ENCODE measurements at regions of chr19 and their contacts with region 1.

Region 1: DNA sequence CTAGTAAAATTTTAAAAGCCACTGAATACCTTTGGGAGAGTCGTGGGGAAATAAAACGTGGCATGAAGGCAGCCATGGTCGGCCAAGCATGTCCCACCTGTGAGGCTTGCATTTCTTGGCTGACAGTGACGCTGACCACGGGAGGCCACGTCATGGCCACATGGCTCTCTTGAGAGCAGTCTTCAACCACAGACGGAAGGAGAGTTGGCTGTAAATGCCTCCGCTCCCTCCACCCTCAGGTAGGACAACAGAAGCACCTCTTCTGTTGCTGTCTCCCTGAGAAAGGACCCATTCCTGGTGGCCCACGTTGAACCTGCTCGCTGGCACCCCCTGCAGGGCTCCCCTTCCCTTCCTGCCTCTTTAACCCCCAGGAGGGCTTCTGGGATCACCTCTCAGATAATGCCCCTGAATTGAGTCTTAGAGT is 10.6 kb upstream of the LRRC25 start:
- DNase-seq: peak in 1 of 2 donors; percentile 66
- ATAC-seq: peak in 3 of 4 donors; percentile 31 to 42 (median 35)
- H3K4me3 ChIP-seq: no peak overlapping the region
- H3K27ac ChIP-seq: no peak overlapping the region
- H3K4me1 ChIP-seq: no peaks in the 10 kb centered on the region
- H3K27me3 ChIP-seq: peaks cover 0 to 1% (median 0%) of the 10 kb centered on the region in 3 donors
- CTCF ChIP-seq: peak; percentile 28

Region 2: GRCh38 chr19:18281082-18282020 is 126.7 kb before region 1 on chr19 and contains the start of gene JUND:
- intact Hi-C with region 1: loop called in 1 of 2 experiments (anchors 2 kb)
- DNase-seq: peak; percentile 98 to 99
- ATAC-seq: peak; percentile 76 to 81 (median 79)
- H3K4me3 ChIP-seq: peak within 1 kb of the TSS; percentile 84
- H3K27ac ChIP-seq: peak within 1 kb of the TSS; percentile 100
- H3K4me1 ChIP-seq: peaks cover 37% of the 10 kb centered on the region
- H3K27me3 ChIP-seq: no peaks in the 10 kb centered on the region
- CTCF ChIP-seq: no peak
- total RNA-seq, gene JUND: 68.0 to 77.1 (median 72.1) TPM

Region 3: GRCh38 chr19:18349524-18350128 is 58.4 kb before region 1 on chr19:
- intact Hi-C with region 1: loop called (anchors 1 to 5 kb)
- DNase-seq: peak; percentile 60 to 73
- ATAC-seq: peak; percentile 57 to 81 (median 74)
- H3K4me3 ChIP-seq: no peak overlapping the region
- H3K27ac ChIP-seq: no peak overlapping the region
- H3K4me1 ChIP-seq: peaks cover 3% of the 10 kb centered on the region
- H3K27me3 ChIP-seq: no peaks in the 10 kb centered on the region
- CTCF ChIP-seq: peak; percentile 75

Region 4: DNA sequence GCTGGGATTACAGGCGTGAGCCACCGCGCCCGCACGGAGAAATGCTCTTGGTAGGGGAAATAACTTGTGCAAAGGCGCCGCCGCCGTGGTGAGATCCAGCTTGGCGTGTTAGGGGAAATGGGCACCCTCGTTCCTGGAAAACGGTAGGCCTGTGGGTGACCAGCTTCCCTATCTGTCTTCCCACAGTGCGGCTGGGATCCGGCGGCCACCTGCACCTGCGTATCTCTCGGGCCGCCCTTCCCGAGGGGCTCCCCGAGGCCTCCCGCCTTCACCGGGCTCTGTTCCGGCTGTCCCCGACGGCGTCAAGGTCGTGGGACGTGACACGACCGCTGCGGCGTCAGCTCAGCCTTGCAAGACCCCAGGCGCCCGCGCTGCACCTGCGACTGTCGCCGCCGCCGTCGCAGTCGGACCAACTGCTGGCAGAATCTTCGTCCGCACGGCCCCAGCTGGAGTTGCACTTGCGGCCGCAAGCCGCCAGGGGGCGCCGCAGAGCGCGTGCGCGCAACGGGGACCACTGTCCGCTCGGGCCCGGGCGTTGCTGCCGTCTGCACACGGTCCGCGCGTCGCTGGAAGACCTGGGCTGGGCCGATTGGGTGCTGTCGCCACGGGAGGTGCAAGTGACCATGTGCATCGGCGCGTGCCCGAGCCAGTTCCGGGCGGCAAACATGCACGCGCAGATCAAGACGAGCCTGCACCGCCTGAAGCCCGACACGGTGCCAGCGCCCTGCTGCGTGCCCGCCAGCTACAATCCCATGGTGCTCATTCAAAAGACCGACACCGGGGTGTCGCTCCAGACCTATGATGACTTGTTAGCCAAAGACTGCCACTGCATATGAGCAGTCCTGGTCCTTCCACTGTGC is 19.7 kb before region 1 on chr19:
- intact Hi-C with region 1: loop called (anchors 2 kb)
- DNase-seq: peak; percentile 84 to 92
- ATAC-seq: peak; percentile 91 to 94 (median 92)
- H3K4me3 ChIP-seq: peak overlapping the region; percentile 59
- H3K27ac ChIP-seq: peak overlapping the region; percentile 50
- H3K4me1 ChIP-seq: peaks cover 8% of the 10 kb centered on the region
- H3K27me3 ChIP-seq: peaks cover 0 to 6% (median 3%) of the 10 kb centered on the region in 3 donors
- CTCF ChIP-seq: peak; percentile 100

Region 5: GRCh38 chr19:18436671-18437490 is 28.8 kb after region 1 on chr19:
- intact Hi-C with region 1: no loop called
- DNase-seq: peak; percentile 74 to 83
- ATAC-seq: peak; percentile 8 to 21 (median 10)
- H3K4me3 ChIP-seq: peak overlapping the region; percentile 68
- H3K27ac ChIP-seq: peak overlapping the region; percentile 9
- H3K4me1 ChIP-seq: peaks cover 18% of the 10 kb centered on the region
- H3K27me3 ChIP-seq: peaks cover 0 to 13% (median 6%) of the 10 kb centered on the region in 3 donors
- CTCF ChIP-seq: no peak